ENCODE measurements at regions of chr2 and their contacts with region 1.

Region 1: DNA sequence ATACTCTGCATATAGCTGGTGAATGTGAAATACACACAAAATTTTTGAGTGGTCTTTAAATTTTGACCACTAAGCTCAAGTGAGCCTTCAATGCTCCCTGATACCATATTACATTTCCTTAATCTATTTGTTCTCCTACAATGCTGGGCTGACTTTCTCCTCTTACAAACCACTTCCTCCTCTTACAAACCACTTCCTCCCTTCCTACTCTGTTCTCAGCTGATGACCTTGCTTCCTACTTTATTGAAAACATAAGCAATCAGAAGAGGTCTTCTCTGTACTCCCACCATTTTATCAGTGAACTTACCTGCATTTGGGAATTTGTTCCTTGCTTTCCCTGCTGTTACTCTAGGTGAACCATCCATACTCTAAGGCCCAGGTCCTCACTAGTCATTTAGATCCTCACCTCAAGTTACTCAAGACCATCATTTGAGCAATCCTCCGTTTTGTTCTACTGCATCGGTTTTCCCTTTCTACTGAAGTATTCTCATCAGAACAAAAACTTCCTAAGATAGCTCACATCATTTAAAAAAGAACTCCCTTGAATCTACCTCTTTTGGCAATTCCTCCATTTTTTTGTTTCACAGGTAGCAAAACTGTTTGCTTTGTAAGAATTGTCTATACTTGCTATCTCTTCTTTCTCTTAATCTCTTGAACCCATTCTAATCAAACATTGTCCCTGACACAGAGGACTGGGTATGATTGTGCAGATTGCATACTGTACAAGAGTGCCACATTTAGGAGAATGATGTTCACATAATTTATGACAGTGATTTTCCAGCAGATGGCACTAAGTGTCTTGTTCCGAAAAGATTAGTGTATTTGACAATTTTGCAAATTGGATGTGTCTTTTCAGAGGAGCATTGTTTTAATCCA is 96.5 kb downstream of the EPB41L5 start:
- DNase-seq: no peak
- H3K4me3 ChIP-seq: no peak overlapping the region
- H3K27ac ChIP-seq: no peak overlapping the region
- H3K4me1 ChIP-seq: peaks cover 3 to 22% of the 10 kb centered on the region in 2 donors
- H3K27me3 ChIP-seq: no peaks in the 10 kb centered on the region
- CTCF ChIP-seq: peak; percentile 29 to 78 (median 60)
- POLR2A ChIP-seq: no peak

Region 2: GRCh38 chr2:120161190-120161589 is 51.8 kb after region 1 on chr2:
- intact Hi-C with region 1: loop called in 1 of 2 experiments (anchors 10 kb)
- DNase-seq: no peak
- H3K4me3 ChIP-seq: no peak overlapping the region
- H3K27ac ChIP-seq: no peak overlapping the region
- H3K4me1 ChIP-seq: no peaks in the 10 kb centered on the region
- H3K27me3 ChIP-seq: no peaks in the 10 kb centered on the region
- CTCF ChIP-seq: no peak
- POLR2A ChIP-seq: no peak

Region 3: DNA sequence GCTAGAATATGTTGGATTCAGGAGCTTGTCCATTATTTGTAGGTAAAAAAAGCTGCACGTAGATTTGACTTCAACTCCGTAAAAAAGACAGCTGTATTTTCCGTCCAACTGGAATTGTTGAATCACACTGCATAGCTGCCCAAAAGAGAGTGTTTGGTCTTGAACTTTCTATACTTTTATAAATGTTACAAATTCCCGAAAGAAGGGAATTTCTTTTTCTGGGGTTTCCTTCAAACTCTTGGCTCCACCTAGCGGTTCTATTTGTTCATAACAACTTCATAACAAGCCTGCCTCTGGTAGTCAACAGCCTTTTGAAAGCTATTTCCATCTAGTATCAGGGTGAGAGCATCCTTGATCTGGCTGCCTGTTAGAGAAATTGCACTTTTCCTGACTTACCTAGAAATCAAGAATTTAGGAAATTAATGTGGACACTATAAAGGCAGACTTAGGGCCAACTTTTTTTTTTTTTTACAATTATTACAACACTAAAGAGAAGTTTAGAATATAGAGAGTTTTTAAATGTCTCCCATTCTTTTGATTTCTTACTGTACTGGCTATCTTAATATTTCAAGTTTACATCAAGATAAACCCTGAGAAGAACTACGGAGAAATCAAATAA is 65.6 kb after region 1 on chr2:
- intact Hi-C with region 1: loop called in 1 of 2 experiments (anchors 5 kb)
- DNase-seq: peak; percentile 21 to 59 (median 37)
- H3K4me3 ChIP-seq: no peak overlapping the region
- H3K27ac ChIP-seq: peak overlapping the region in 1 of 5 donors; percentile 69
- H3K4me1 ChIP-seq: peaks cover 5% of the 10 kb centered on the region in 2 donors
- H3K27me3 ChIP-seq: no peaks in the 10 kb centered on the region
- CTCF ChIP-seq: peak; percentile 58 to 83 (median 79)
- POLR2A ChIP-seq: no peak

Region 4: DNA sequence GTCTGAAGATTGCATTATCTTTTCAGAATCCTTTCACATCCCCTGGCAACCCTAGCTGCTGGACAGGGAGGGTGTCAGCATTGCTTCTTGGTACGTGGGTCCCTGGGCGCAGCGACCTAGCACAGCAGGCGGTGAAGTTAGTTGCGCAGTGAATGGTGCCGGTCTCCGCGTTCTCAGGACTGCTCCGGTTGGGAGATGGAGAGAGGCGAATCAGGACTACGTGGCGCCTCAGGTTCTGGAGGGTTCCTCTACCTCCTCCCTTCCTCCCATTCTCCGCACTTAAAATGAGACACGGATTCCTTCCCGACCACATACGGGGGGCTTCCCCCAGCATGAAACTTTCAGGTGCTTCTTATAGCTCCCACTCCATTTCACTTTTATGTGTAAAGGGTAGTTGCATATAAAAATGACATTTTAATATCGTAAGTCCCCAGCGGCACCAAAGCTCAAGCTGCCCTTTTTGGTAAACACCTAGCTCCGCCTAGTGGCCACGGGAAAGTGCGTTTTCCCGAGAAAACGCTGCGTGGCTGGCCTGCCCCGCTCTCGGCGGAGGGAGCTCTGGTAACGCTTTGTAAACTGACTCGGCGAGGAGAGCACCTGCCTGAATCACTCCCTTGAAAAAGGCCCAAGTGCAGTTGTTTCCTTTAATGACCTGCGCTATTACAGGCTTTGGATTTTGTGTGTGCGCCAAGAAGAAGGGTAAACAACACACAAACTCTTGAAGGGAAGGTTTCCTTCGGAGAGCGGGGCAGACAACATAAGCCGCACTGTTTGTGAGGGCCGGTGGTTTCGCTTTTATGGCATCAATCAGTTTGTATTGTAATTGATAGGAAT is 203.7 kb after region 1 on chr2:
- intact Hi-C with region 1: loop called (anchors 5 to 10 kb)
- DNase-seq: peak; percentile 82 to 92 (median 88)
- H3K4me3 ChIP-seq: peak overlapping the region in 2 of 4 donors; percentile 27 to 51
- H3K27ac ChIP-seq: peak overlapping the region in 3 of 5 donors; percentile 35 to 71 (median 57)
- H3K4me1 ChIP-seq: peaks cover 0 to 10% of the 10 kb centered on the region in 2 donors
- H3K27me3 ChIP-seq: no peaks in the 10 kb centered on the region
- CTCF ChIP-seq: peak; percentile 86 to 95 (median 93)
- POLR2A ChIP-seq: no peak